Activated T-helper 2 cell treated with anti-CD3 and anti-CD28 coated beads, Interferon-gamma antibody, Interleukin-2, Interleukin-4, amounts not matched to agents 10 μg/mL and 5 μg/mL and 100 μg/mL, durations not matched to agents 14 hours and 24 hours and 36 hours (primary cell): ENCODE measurements at regions of chr14 and their contacts with region 1.

Region 1: GRCh38 chr14:105480952-105481801 is 5.5 kb upstream of the CRIP1 start:
- DNase-seq: peak; percentile 84
- H3K4me3 Mint-ChIP-seq: peak overlapping the region; percentile 41
- H3K27ac Mint-ChIP-seq: peak overlapping the region; percentile 97
- H3K4me1 Mint-ChIP-seq: peaks cover 27% of the 10 kb centered on the region
- H3K27me3 Mint-ChIP-seq: peaks cover 26% of the 10 kb centered on the region

Region 2: GRCh38 chr14:104800771-104801519 is 680.2 kb before region 1 on chr14 and contains the start of gene ZBTB42:
- intact Hi-C with region 1: loop called (anchors 10 kb)
- DNase-seq: peak; percentile 77
- H3K4me3 Mint-ChIP-seq: peak within 1 kb of the TSS; percentile 86
- H3K27ac Mint-ChIP-seq: peak within 1 kb of the TSS; percentile 52
- H3K4me1 Mint-ChIP-seq: peaks cover 13% of the 10 kb centered on the region
- H3K27me3 Mint-ChIP-seq: peaks cover 2% of the 10 kb centered on the region
- total RNA-seq, gene ZBTB42: 5.2 and 5.4 TPM in 2 replicates

Region 3: DNA sequence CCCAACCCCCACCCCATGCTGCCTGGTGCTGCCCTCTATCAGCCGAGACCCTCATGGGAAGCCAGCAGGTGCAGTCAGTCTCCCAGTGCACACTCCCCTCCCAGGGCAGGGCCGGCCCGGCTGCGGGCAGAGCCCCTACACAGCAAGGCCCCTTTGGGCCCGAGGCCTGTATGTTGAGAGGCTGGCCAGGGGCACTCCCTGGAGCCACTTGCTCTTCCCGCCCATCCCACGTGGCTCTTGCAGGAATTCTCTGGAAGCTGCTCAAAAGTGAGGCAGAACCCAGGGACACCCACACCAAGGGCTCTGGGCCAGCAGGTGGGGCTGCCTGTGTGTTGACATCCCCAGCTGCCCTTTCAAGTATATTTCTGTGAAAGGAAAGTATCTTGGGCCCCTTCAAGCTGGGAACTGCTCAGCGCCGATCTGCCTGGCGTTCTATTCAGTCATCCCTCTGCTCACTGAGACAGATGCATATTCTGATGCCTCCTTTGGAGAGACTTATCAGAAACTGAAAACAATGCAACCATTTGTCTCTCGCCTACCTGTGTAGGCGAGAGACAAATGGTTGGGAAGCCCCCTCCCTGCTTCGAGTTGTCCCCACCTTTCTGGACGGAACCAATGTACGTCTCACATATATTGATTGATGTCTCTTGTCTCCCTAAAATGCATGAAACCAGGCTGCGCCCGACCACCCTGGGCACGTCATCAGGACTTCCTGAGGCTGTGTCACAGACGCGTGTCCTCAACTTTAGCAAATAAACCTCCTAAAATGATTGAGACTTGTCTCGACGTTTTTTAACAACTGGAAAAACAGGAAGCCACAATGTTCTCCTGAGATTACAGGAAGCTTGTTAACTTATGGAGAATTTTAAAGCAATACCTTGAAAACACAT is 421.9 kb before region 1 on chr14:
- intact Hi-C with region 1: loop called (anchors 2 kb)
- DNase-seq: no peak
- H3K4me3 Mint-ChIP-seq: peak overlapping the region; percentile 76
- H3K27ac Mint-ChIP-seq: peak overlapping the region; percentile 97
- H3K4me1 Mint-ChIP-seq: peaks cover 41% of the 10 kb centered on the region
- H3K27me3 Mint-ChIP-seq: no peaks in the 10 kb centered on the region

Region 4: GRCh38 chr14:105065280-105066228 is 415.6 kb before region 1 on chr14 and contains the start of gene GPR132:
- intact Hi-C with region 1: loop called (anchors 2 kb)
- DNase-seq: peak; percentile 88
- H3K4me3 Mint-ChIP-seq: peak within 1 kb of the TSS; percentile 87
- H3K27ac Mint-ChIP-seq: peak within 1 kb of the TSS; percentile 88
- H3K4me1 Mint-ChIP-seq: peaks cover 50% of the 10 kb centered on the region
- H3K27me3 Mint-ChIP-seq: no peaks in the 10 kb centered on the region
- total RNA-seq, gene GPR132: 27.1 and 29.8 TPM in 2 replicates

Region 5: DNA sequence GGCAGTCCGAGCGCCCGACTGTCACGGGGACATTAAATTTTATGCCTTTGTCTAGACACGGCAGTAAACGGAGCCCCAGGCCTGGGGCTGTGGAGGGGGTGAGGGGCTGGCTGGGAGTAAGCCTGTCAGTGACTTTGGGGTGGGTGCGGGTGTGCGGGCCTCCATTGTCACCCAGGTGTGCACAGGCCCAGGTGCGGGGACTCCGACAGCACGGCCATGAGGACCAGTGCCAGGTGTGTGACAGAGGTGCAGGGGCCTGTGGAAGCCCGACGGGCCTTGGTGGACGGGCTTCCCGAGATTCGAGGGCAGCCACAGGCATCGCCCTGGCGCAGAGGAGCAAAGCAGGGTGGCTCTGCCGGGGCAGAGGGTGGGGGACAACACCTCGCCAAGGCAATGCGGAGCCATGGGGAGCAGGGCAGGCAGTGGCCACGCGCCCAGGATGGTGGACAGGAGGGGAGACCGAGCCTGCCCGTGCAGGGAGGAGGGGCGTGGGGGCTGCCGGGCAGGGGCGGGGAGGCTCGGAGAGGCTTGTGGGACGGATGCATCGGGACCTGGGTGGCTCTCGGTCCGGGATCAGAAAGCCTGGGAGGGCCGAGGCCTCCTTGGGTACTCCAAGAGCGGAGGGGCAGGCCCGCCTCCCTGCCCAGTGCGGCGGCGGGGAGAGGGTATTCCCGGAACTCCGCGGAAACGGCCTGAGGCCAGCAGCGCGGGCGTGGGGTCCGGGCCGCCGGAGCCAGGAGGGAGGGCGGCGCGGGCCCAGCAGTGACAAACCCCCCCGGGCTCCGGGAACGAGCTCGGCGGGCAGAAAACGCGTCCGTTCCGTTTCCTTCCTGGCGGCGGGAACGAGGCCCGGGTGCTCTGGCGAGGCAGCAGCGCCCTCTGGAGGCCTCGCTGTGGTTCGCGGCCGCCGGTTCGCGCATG is 46.7 kb after region 1 on chr14:
- intact Hi-C with region 1: loop called (anchors 2 kb)
- DNase-seq: peak; percentile 75
- H3K4me3 Mint-ChIP-seq: peak overlapping the region; percentile 71
- H3K27ac Mint-ChIP-seq: no peak overlapping the region
- H3K4me1 Mint-ChIP-seq: peaks cover 2% of the 10 kb centered on the region
- H3K27me3 Mint-ChIP-seq: peaks cover 25% of the 10 kb centered on the region